HCT116 (cell line): ENCODE measurements at regions of chr5 and their contacts with region 1.

Region 1: GRCh38 chr5:59007460-59008063 is 424.7 kb downstream of the RAB3C start:
- DNase-seq: peak; percentile 10
- ATAC-seq: no peak
- H3K4me3 ChIP-seq: no peak overlapping the region
- H3K27ac ChIP-seq: no peak overlapping the region
- H3K4me1 ChIP-seq: no peaks in the 10 kb centered on the region
- H3K27me3 ChIP-seq: peaks cover 5% of the 10 kb centered on the region
- CTCF ChIP-seq: peak; percentile 32 to 53 (median 52); a peak in 4 of 6 replicates
- POLR2A ChIP-seq: no peak
- RAD21 ChIP-seq: peak; percentile 71

Region 2: GRCh38 chr5:58871648-58872242 is 135.8 kb before region 1 on chr5:
- CTCF ChIA-PET with region 1: no interaction called
- POLR2A ChIA-PET with region 1: no interaction called
- RAD21 ChIA-PET with region 1: no interaction called
- intact Hi-C with region 1: loop called (anchors 5 kb)
- DNase-seq: peak; percentile 28
- ATAC-seq: peak; percentile 67
- H3K4me3 ChIP-seq: no peak overlapping the region
- H3K27ac ChIP-seq: no peak overlapping the region
- H3K4me1 ChIP-seq: no peaks in the 10 kb centered on the region
- H3K27me3 ChIP-seq: peaks cover 13% of the 10 kb centered on the region; the same call in 1 of the 2 replicates
- CTCF ChIP-seq: peak in 2 of 3 experiments; percentile 45 to 56; a peak in 3 of 6 replicates
- POLR2A ChIP-seq: no peak
- RAD21 ChIP-seq: peak; percentile 27; the same call in 1 of the 2 replicates

Region 3: GRCh38 chr5:59158165-59158564 is 150.6 kb after region 1 on chr5:
- CTCF ChIA-PET with region 1: no interaction called
- POLR2A ChIA-PET with region 1: no interaction called
- RAD21 ChIA-PET with region 1: no interaction called
- intact Hi-C with region 1: no loop called
- DNase-seq: no peak
- ATAC-seq: no peak
- H3K4me3 ChIP-seq: no peak overlapping the region
- H3K27ac ChIP-seq: no peak overlapping the region
- H3K4me1 ChIP-seq: no peaks in the 10 kb centered on the region
- H3K27me3 ChIP-seq: peaks cover 12% of the 10 kb centered on the region; the same call in 1 of the 2 replicates
- CTCF ChIP-seq: no peak
- POLR2A ChIP-seq: no peak
- RAD21 ChIP-seq: no peak